ENCODE measurements at regions of chr12 and their contacts with region 1.

Region 1: DNA sequence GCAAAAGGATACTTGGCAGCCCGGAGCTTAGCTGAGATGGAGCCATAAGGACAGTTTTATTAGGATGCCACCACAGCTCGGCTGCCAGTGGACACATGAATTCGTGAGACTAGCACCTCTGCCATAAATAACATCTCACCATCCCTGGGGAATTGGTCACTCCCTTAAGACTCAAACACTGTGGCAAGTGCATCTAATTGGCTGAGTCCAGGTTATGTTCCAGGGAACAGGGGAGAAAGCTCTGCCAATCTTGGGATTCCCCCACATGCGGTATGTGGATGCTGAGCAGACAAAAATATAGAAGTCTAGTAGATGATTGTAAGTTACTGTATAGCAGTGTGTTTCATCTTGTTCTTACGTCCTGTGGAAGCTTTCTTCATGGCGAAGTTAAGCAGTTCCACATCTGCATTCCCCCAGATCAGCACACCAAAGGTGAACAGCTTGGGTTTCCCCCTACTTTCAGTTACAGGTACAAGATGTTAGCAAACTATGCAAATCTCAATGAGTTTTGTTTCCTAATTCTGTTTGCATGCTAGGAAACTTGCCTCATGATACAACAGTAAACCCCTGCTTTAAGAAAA is 131.1 kb downstream of the ETV6 start:
- DNase-seq: no peak
- H3K4me3 Mint-ChIP-seq: no peak overlapping the region
- H3K27ac Mint-ChIP-seq: peak overlapping the region; percentile 90
- H3K4me1 Mint-ChIP-seq: peaks cover 85% of the 10 kb centered on the region
- H3K27me3 Mint-ChIP-seq: no peaks in the 10 kb centered on the region

Region 2: DNA sequence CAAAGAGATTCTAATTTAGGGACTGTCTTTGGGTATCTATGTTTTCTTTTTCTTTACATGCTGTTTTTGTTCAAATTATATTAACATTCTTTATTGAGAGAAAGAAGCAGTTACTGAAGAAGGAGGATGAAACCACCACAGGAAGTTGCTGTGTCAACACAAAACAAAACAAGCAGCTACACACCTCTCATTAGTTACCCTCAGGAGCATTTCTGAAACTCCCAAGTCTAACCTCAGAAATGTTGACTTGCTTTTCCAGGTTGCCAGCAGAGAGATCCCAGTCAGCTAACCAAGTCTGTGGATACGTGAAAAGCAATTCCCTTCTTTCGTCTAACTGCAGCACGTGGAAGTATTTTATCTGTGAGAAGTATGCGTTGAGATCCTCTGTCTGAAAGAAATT is 1715.4 kb before region 1 on chr12:
- intact Hi-C with region 1: no loop called
- DNase-seq: no peak
- H3K4me3 Mint-ChIP-seq: no peak overlapping the region
- H3K27ac Mint-ChIP-seq: no peak overlapping the region
- H3K4me1 Mint-ChIP-seq: no peaks in the 10 kb centered on the region
- H3K27me3 Mint-ChIP-seq: peaks cover 36% of the 10 kb centered on the region

Region 3: DNA sequence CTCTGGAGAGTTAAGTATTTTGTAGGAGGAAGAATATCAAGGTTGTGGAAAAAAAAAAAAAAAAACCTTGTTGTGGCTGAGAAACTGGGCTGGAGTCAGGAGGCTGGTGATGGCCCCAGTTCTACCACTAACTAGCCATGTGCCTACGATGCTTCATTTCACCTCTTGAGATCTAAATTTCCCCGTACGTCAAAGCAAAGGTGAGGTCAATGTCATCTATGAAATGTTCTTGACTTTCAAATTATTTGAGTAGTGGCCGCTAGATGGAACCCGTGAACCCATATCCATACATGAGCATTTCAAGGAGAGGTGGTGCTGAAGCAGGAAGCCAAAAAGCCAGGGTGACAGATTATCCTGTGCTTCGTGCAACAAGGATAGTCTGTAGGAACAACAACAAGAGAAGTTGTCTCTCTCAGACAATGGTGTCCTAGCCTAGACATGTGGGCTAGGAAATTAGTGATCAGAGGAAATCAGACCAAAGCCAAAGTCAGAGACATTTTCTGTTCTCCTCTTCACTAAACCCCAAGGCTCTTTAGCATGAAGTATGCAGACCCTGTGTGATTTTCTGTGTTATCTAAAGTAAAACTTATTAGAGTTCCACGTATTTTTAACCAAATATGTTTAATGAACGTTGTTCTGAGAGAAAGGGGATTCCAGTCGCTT is 226.6 kb before region 1 on chr12:
- intact Hi-C with region 1: no loop called
- DNase-seq: peak; percentile 33
- H3K4me3 Mint-ChIP-seq: peak overlapping the region; percentile 45
- H3K27ac Mint-ChIP-seq: no peak overlapping the region
- H3K4me1 Mint-ChIP-seq: peaks cover 27% of the 10 kb centered on the region
- H3K27me3 Mint-ChIP-seq: peaks cover 8% of the 10 kb centered on the region

Region 4: DNA sequence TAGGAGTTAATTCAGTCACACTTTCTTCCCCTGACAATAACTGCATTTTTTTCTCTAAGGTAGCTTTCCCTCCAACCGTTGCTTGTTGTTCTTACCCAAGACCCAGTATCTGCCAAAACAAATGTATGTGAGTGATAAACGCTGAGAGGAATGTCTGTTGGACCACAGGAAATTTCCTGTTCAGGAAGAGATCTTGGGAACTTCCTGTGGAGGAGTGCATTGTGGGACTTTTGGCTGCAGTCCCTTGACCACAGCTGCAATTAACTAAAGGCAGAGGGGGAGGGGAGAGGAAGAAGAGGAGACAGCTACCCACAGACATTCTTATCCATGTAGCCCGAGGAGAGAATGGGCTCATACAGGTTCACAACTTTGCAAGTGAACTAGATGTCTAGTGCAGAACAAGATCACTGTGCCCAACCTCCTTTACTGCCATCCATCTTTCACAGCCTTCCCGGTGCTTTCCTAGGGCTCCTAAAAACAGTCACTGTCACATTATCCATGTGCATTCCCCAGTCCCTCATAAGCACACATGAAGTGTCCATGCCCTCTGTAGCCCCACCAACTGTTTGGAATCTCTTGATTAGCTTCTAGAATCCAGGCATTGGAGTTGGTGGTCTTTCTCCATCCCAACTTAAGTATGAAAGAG is 18.4 kb after region 1 on chr12:
- intact Hi-C with region 1: loop called (anchors 2 kb)
- DNase-seq: no peak
- H3K4me3 Mint-ChIP-seq: peak overlapping the region; percentile 24
- H3K27ac Mint-ChIP-seq: peak overlapping the region; percentile 78
- H3K4me1 Mint-ChIP-seq: peaks cover 73% of the 10 kb centered on the region
- H3K27me3 Mint-ChIP-seq: no peaks in the 10 kb centered on the region

Region 5: GRCh38 chr12:12081836-12082497 is 301.4 kb after region 1 on chr12:
- intact Hi-C with region 1: no loop called
- DNase-seq: no peak
- H3K4me3 Mint-ChIP-seq: no peak overlapping the region
- H3K27ac Mint-ChIP-seq: no peak overlapping the region
- H3K4me1 Mint-ChIP-seq: no peaks in the 10 kb centered on the region
- H3K27me3 Mint-ChIP-seq: no peaks in the 10 kb centered on the region

Region 6: DNA sequence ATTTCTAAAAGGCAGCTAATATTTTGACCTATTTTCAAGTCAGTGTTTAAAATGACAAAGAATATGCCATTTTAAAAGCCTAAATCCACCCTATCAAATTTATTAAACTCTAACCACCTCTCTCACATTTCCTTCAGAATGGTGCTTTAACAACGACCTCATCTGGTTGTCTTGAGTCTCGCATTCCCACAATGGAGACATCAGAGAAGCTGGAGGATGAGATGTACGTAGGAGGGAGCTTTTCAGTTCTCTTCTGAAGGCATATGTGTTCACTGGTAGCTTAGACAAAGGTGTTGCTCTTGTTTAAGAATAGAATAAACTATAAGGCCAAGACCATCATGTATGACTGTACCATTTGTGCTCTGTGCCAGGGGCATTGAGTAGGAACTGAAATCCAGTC is 373.0 kb after region 1 on chr12:
- intact Hi-C with region 1: no loop called
- DNase-seq: no peak
- H3K4me3 Mint-ChIP-seq: no peak overlapping the region
- H3K27ac Mint-ChIP-seq: no peak overlapping the region
- H3K4me1 Mint-ChIP-seq: no peaks in the 10 kb centered on the region
- H3K27me3 Mint-ChIP-seq: peaks cover 12% of the 10 kb centered on the region